Sciatic nerve (tissue), 2 donors: ENCODE measurements at regions of chr10 and their contacts with region 1.

Region 1: DNA sequence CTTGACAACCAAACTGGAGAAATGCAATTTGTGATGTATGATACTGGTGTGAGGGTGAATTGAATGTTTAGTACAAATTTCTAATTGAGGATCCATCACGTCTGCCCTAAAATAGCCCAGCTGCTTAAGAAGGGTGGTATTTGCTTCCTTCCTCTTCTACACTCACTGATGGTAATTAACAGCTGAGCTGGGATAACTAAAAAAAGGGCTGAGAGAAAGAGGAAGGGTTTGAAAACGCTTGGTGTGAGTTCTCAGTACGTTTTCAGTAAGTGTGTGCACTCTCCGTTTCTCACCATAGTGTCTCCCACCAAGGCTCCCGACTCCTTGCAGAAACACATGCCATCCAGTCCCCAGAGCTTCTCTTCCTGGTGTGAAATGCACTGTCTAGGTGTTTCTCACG is 54.3 kb downstream of the MAP3K8 start:
- DNase-seq: no peak
- ATAC-seq: peak; percentile 51

Region 2: DNA sequence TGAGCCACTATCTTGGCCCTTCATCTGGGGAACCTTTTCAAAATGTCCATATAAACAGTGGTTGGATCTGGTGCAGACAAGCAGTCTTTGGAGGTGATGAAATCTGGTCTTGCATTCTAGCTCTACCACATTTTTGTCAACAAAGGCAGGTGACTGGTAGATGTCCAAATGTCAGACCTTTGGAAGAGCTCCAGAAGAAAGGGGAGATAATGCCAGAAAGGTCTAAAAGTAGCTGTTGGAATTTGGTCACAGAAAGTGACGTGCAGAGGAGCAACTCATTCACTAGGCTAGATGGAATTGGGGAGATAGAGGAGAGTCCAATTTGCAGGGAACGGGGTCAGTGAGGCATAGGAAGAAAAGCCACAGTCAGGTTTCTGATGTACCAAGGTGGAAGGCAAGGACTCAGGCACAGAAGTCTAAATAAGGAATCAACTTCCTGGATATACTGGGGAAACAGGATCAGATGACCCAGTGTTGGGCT is 1991.8 kb before region 1 on chr10:
- intact Hi-C with region 1: loop called (anchors 5 kb)
- DNase-seq: no peak
- ATAC-seq: no peak